ENCODE measurements at regions of chr11 and their contacts with region 1.

Region 1: GRCh38 chr11:70191495-70192140 is 11.5 kb upstream of the FADD start:
- DNase-seq: peak; percentile 87
- H3K4me3 ChIP-seq: no peak overlapping the region
- H3K27ac ChIP-seq: no peak overlapping the region
- H3K4me1 ChIP-seq: no peaks in the 10 kb centered on the region
- H3K27me3 ChIP-seq: no peaks in the 10 kb centered on the region
- CTCF ChIP-seq: peak; percentile 79 to 85 (median 84)
- POLR2A ChIP-seq: no peak

Region 2: DNA sequence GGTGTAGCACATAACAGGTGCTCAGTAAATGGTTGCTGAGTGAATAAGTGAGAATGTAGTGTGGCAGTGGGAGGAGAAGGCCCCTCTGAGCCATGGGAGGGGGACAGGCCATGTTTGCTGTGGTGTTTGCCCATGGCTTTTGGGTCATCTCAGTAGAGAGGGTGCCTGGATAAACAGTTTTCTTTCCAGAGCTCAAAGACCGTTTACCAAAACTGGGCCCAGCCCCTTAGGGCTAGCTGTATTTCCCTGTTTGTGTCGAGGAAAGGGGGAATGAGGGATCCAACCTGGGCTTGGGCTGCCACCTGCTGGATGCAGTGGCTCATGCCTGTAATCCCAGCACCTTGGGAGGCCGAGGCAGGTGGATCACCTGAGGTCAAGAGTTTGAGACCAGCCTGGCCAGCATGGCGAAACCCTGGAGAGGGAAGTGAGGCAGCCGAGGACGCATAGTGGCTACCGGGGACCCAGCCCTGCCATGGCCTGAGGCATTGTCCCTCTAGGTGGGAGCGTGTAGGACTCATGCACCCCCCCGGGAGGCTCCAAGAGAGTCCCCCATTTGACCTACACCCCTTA is 507.8 kb before region 1 on chr11:
- intact Hi-C with region 1: loop called (anchors 5 kb)
- DNase-seq: no peak
- H3K4me3 ChIP-seq: no peak overlapping the region
- H3K27ac ChIP-seq: no peak overlapping the region
- H3K4me1 ChIP-seq: no peaks in the 10 kb centered on the region
- H3K27me3 ChIP-seq: no peaks in the 10 kb centered on the region
- CTCF ChIP-seq: peak in 2 of 3 experiments; percentile 21 to 22
- POLR2A ChIP-seq: no peak

Region 3: DNA sequence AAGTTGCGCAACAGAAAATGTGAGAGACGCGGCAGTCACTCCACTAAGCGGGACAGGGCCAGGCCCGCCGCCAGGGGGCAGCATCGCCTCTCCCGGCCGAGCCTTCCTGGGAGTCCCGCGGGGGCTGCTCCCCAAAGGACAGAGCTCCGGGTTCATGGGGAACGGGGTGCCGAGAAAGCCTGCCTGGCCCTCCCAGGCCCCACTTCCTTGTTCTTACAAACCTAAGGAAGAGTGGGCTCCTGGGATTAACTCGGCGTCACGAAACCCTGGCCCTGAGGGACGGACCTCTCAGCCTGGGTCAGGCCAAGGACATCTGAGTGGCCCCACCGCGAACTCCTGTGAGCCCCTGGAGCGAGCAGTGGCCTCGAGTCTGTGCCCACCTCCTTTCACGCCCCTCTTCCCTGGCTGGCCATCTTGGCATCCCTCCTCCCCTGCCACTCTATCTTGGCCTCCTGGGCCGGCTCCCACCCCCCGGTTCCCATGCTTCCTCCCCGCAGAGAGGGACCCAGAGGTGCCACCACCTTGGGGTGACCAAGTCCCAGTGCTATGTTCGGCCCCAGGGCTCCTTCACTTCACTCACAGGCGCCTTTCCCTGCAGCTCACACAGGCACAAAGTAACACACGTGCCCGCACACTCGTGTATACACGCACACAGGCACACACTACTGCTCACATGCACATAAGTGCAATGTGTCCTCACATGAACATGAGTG is 272.5 kb before region 1 on chr11:
- intact Hi-C with region 1: loop called (anchors 5 kb)
- DNase-seq: peak; percentile 83
- H3K4me3 ChIP-seq: peak overlapping the region in 1 of 2 donors; percentile 36
- H3K27ac ChIP-seq: no peak overlapping the region
- H3K4me1 ChIP-seq: peaks cover 15% of the 10 kb centered on the region
- H3K27me3 ChIP-seq: no peaks in the 10 kb centered on the region
- CTCF ChIP-seq: peak; percentile 87 to 96 (median 87)
- POLR2A ChIP-seq: no peak

Region 4: DNA sequence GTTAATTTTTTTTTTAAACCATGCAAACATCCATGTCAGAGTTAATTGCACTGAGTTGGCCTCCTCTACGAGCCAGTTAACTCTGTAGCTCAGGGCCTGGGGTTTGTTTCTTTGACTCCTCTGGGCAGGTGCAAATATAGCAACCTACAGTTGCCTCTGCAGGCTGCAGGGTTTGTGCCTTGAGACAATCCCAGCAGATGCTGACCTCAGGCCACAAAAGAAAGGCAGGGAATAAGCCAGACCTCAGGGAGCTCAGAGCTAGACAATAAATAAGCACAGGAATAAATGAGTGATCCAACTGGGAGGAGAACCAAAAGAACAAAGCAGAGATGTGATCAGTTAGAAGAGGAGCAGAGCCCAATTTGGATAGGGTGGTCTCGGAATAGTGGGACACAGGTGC is 669.9 kb after region 1 on chr11:
- intact Hi-C with region 1: no loop called
- DNase-seq: no peak
- H3K4me3 ChIP-seq: no peak overlapping the region
- H3K27ac ChIP-seq: no peak overlapping the region
- H3K4me1 ChIP-seq: no peaks in the 10 kb centered on the region
- H3K27me3 ChIP-seq: no peaks in the 10 kb centered on the region
- CTCF ChIP-seq: no peak
- POLR2A ChIP-seq: no peak

Measured in testis (tissue), 5 donors.